ENCODE measurements at regions of chr1 and their contacts with region 1.

Region 1: GRCh38 chr1:217620814-217621213 is 10.1 kb downstream of the GPATCH2 start:
- DNase-seq: no peak
- ATAC-seq: no peak
- H3K4me3 ChIP-seq: no peak overlapping the region
- H3K4me3 Mint-ChIP-seq: no peak overlapping the region
- H3K27ac ChIP-seq: no peak overlapping the region
- H3K27ac Mint-ChIP-seq: no peak overlapping the region
- H3K4me1 ChIP-seq: no peaks in the 10 kb centered on the region
- H3K4me1 Mint-ChIP-seq: peaks cover 45% of the 10 kb centered on the region
- H3K27me3 ChIP-seq: no peaks in the 10 kb centered on the region
- H3K27me3 Mint-ChIP-seq: no peaks in the 10 kb centered on the region
- CTCF ChIP-seq: no peak

Region 2: DNA sequence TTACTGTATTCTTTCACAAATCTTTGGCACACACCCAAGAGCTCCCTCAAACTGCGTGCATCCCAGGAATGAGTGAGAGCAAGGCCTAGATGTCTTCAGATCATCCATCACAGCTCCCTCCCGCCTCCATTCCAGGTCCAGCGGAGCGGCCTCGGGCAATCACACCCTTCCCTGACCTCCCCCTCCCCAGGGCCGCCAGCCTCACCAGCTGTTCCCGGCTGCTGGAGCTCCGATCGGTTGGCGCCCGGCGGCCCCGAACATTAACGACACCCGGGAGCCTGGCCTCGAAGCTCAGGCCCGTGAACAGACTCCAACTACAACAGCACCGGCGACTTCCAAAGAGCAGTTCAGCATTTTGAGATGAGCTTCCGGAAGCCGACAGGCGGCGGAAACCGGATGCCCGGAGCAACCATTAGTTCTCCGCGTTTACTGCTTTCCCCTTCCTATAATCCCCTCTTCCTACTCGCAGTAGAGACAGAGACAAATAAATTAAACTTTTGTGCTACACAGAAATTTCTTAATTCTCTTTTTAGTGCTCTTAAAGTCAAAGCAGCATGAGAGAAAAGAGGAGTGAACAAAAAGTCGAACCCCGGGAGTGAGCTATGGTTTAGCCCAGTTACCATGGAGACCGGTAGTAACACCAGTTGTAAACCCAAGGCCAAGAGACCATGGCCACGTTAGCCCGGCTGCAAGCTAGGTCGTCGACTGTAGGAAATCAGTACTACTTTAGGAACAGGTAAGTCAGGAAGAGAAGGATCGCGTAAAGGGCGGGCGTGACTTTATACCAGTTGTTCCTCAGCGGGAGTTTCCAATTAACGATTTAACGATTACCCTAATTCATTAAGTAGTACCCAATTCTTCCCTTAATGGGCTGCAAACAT is 10.1 kb after region 1 on chr1 and contains the starts of genes GPATCH2 and SPATA17:
- CTCF ChIA-PET with region 1: no interaction called
- POLR2A ChIA-PET with region 1: interaction called, 15 read pairs
- intact Hi-C with region 1: no loop called
- DNase-seq: peak; percentile 62 to 94 (median 72)
- ATAC-seq: peak; percentile 88
- H3K4me3 ChIP-seq: peak within 1 kb of the TSS; percentile 78
- H3K4me3 Mint-ChIP-seq: peak within 1 kb of the TSS; percentile 94
- H3K27ac ChIP-seq: peak within 1 kb of the TSS; percentile 70 to 95
- H3K27ac Mint-ChIP-seq: peak within 1 kb of the TSS; percentile 98
- H3K4me1 ChIP-seq: peaks cover 7% of the 10 kb centered on the region
- H3K4me1 Mint-ChIP-seq: peaks cover 51% of the 10 kb centered on the region
- H3K27me3 ChIP-seq: no peaks in the 10 kb centered on the region
- H3K27me3 Mint-ChIP-seq: peaks cover 18% of the 10 kb centered on the region
- CTCF ChIP-seq: peak; percentile 20
- total RNA-seq, gene GPATCH2: 9.2 to 9.6 TPM
- total RNA-seq, gene SPATA17: not detected

Region 3: GRCh38 chr1:217642455-217642854 is 21.6 kb after region 1 on chr1:
- CTCF ChIA-PET with region 1: no interaction called
- POLR2A ChIA-PET with region 1: no interaction called
- intact Hi-C with region 1: loop called in 1 of 2 experiments (anchors 2 kb)
- DNase-seq: no peak
- ATAC-seq: no peak
- H3K4me3 ChIP-seq: no peak overlapping the region
- H3K4me3 Mint-ChIP-seq: no peak overlapping the region
- H3K27ac ChIP-seq: no peak overlapping the region
- H3K27ac Mint-ChIP-seq: no peak overlapping the region
- H3K4me1 ChIP-seq: no peaks in the 10 kb centered on the region
- H3K4me1 Mint-ChIP-seq: no peaks in the 10 kb centered on the region
- H3K27me3 ChIP-seq: peaks cover 0 to 2% of the 10 kb centered on the region in 2 experiments
- H3K27me3 Mint-ChIP-seq: peaks cover 35% of the 10 kb centered on the region
- CTCF ChIP-seq: no peak

Measured in CD4-positive, alpha-beta T cell (primary cell).